ENCODE measurements at regions of chr1 and their contacts with region 1.

Region 1: GRCh38 chr1:176374967-176375569 is 87.9 kb upstream of the PAPPA2 start:
- DNase-seq: peak; percentile 86
- H3K4me3 Mint-ChIP-seq: no peak overlapping the region
- H3K27ac Mint-ChIP-seq: no peak overlapping the region
- H3K4me1 Mint-ChIP-seq: no peaks in the 10 kb centered on the region
- H3K27me3 Mint-ChIP-seq: peaks cover 2% of the 10 kb centered on the region

Region 2: GRCh38 chr1:176416777-176417176 is 41.7 kb after region 1 on chr1:
- intact Hi-C with region 1: no loop called
- DNase-seq: no peak
- H3K4me3 Mint-ChIP-seq: no peak overlapping the region
- H3K27ac Mint-ChIP-seq: no peak overlapping the region
- H3K4me1 Mint-ChIP-seq: no peaks in the 10 kb centered on the region
- H3K27me3 Mint-ChIP-seq: no peaks in the 10 kb centered on the region

Region 3: GRCh38 chr1:176691251-176692228 is 316.5 kb after region 1 on chr1:
- intact Hi-C with region 1: loop called (anchors 1 kb)
- DNase-seq: peak; percentile 72
- H3K4me3 Mint-ChIP-seq: no peak overlapping the region
- H3K27ac Mint-ChIP-seq: no peak overlapping the region
- H3K4me1 Mint-ChIP-seq: no peaks in the 10 kb centered on the region
- H3K27me3 Mint-ChIP-seq: no peaks in the 10 kb centered on the region

Region 4: GRCh38 chr1:176880954-176881595 is 506.0 kb after region 1 on chr1:
- intact Hi-C with region 1: loop called (anchors 2 kb)
- DNase-seq: peak; percentile 81
- H3K4me3 Mint-ChIP-seq: no peak overlapping the region
- H3K27ac Mint-ChIP-seq: no peak overlapping the region
- H3K4me1 Mint-ChIP-seq: no peaks in the 10 kb centered on the region
- H3K27me3 Mint-ChIP-seq: no peaks in the 10 kb centered on the region

Measured in activated CD4-positive, alpha-beta T cell treated with anti-CD3 and anti-CD28 coated beads, Interleukin-2, amount 10 ng/mL, durations not matched to agents 24 days and 14 days (primary cell).